Transverse colon (tissue), 4 donors: ENCODE measurements at regions of chrX and their contacts with region 1.

Region 1: DNA sequence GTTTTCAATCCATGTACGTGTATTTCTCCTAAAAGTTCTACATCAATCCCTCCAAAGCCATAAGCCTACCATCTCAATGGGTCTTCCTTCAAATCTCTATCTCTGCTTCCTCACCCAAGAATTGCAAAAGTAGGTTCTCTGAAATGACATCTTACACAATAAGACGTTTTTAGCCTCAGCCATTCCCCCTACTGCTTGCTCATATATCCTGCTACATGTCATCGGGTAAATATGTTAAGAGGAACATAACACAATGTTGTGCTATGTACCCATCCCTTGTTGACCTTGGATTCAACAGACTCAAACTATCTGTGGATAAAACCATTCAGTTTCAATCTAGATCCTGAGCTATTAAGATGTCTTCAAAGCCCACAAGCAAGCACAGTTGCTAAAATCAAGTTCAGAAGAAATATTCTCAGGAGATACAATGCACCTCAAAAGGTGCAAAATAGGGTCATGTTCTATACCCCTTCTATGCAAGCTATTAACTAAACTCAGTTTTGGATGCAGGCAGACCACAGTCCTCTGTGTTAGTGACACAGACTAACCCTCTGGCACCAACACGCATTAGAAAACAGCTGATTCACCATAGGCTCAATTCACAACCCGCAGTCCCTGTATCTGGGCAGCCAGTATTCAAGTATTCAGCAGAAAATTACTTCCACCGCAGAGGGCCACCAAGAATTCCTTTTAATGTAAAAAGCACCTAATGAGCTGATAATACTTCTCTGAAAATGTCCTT is 56.8 kb downstream of the CD99L2 start:
- DNase-seq: no peak
- H3K4me3 ChIP-seq: no peak overlapping the region
- H3K27ac ChIP-seq: no peak overlapping the region
- H3K4me1 ChIP-seq: peaks cover 0 to 4% (median 0%) of the 10 kb centered on the region in 4 donors
- H3K27me3 ChIP-seq: no peaks in the 10 kb centered on the region
- CTCF ChIP-seq: no peak
- EP300 ChIP-seq: no peak
- POLR2A ChIP-seq: no peak

Region 2: GRCh38 chrX:149313871-149314371 is 1527.7 kb before region 1 on chrX:
- in situ Hi-C with region 1: no loop called
- intact Hi-C with region 1: no loop called
- DNase-seq: no peak
- H3K4me3 ChIP-seq: no peak overlapping the region
- H3K27ac ChIP-seq: no peak overlapping the region
- H3K4me1 ChIP-seq: no peaks in the 10 kb centered on the region
- H3K27me3 ChIP-seq: no peaks in the 10 kb centered on the region
- CTCF ChIP-seq: no peak
- EP300 ChIP-seq: no peak
- POLR2A ChIP-seq: no peak

Region 3: DNA sequence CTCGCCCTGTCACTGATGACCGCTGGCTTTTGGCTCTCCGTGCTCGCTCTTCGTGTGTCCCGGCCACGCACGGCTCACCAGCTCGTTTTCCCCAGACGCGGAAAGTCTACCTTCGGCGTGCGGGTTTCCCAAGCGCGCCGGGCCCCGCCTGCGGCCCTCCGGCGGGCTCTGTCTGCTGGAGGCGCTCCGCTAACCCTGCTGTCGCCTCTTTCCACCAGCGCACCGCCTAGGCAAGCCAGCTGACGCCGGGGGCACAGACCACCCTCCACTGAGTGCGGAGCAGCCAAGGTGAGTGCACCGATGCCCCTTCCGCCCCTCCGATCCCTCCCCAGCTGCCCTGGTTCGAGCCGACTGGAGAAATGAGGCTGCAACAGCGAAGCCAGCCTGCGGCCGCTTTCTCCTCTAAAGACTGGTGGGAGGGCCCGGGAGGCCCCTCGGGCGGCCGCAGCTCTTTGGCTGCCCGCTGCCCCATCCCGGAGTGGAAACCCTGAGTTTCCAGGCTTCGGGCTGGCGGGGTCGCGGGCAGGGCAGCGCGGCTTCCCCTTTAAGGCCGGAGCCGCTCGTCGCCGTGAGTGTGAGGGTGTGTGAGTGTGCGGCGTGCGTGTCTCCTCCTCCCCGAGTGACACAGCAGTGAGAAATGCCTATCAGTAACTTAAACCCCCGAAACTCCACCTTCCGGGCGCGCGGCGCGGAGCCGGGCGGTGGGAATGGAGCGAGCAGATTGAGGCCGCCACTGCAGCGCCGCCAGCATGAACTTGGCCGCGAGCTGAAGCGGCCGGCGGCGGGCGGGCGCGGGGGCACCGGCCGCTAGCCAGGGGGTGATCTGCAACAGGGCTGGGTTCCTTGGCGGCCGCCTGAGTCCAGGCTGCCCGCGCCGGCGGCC is 478.8 kb before region 1 on chrX and contains the start of gene MAMLD1:
- in situ Hi-C with region 1: no loop called
- intact Hi-C with region 1: no loop called
- DNase-seq: peak; percentile 67
- H3K4me3 ChIP-seq: peak within 1 kb of the TSS; percentile 20 to 68 (median 43)
- H3K27ac ChIP-seq: peak within 1 kb of the TSS; percentile 79 to 88 (median 85)
- H3K4me1 ChIP-seq: peaks cover 0 to 28% (median 9%) of the 10 kb centered on the region in 4 donors
- H3K27me3 ChIP-seq: peaks cover 34% of the 10 kb centered on the region
- CTCF ChIP-seq: no peak
- EP300 ChIP-seq: no peak
- POLR2A ChIP-seq: peak; percentile 24
- total RNA-seq, gene MAMLD1: 0.20 to 1.2 (median 0.95) TPM in 3 of 4 donors, not detected in the other

Region 4: GRCh38 chrX:150826981-150827380 is 14.6 kb before region 1 on chrX:
- in situ Hi-C with region 1: no loop called
- intact Hi-C with region 1: loop called (anchors 1 kb)
- DNase-seq: no peak
- H3K4me3 ChIP-seq: no peak overlapping the region
- H3K27ac ChIP-seq: no peak overlapping the region
- H3K4me1 ChIP-seq: no peaks in the 10 kb centered on the region
- H3K27me3 ChIP-seq: no peaks in the 10 kb centered on the region
- CTCF ChIP-seq: no peak
- EP300 ChIP-seq: no peak
- POLR2A ChIP-seq: no peak

Region 5: DNA sequence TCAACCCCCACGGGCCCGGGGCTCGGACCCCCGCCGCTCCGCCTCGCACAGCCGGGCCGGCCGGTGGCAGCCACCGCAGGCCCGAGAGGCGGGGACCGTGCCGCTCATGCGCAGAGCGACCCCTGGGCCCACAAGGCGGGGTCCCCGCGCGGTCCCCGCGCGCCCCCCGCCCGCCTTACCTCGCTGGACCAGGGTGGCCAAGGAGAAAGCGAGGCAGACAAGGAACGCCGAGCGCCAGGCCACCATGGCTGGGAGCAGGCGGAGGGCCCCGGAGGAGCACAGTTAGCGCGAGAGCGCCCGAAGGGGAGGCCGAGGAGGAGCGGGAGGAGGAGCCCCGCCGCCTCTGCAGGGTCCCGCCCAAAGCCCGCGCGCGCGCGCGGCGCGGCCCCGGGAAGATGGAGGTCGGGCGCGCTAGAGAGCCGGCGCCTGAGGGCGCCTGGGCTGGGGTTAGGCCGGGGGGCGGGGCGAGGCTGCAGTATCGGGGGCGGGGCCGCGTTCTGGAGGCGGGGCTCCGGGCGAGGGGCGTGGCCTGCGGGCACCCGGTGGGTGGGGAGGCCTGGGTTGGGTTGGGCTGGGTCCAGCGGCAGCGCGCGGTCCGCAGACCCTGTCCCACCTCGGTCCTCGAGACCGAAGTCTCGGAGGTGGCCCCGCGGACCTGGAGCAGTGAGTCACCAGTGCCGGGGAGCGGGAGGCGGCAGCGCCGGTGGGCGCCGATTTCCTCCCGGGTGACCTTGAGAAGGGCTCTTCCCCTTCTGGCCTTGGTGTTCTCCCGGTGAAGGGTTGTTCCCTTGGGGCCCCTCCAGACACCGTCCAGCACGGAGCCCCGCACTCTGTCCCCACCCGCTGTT is 56.9 kb after region 1 on chrX and contains the start of gene CD99L2:
- in situ Hi-C with region 1: no loop called
- intact Hi-C with region 1: no loop called
- DNase-seq: peak; percentile 93
- H3K4me3 ChIP-seq: peak within 1 kb of the TSS; percentile 53 to 77 (median 65)
- H3K27ac ChIP-seq: peak within 1 kb of the TSS; percentile 77 to 89 (median 84)
- H3K4me1 ChIP-seq: no peaks in the 10 kb centered on the region
- H3K27me3 ChIP-seq: no peaks in the 10 kb centered on the region
- CTCF ChIP-seq: no peak
- EP300 ChIP-seq: no peak
- POLR2A ChIP-seq: peak; percentile 67
- total RNA-seq, gene CD99L2: 12.3 to 22.4 (median 16.5) TPM